Right cardiac atrium (tissue), 5 donors: ENCODE measurements at regions of chr2 and their contacts with region 1.

Region 1: DNA sequence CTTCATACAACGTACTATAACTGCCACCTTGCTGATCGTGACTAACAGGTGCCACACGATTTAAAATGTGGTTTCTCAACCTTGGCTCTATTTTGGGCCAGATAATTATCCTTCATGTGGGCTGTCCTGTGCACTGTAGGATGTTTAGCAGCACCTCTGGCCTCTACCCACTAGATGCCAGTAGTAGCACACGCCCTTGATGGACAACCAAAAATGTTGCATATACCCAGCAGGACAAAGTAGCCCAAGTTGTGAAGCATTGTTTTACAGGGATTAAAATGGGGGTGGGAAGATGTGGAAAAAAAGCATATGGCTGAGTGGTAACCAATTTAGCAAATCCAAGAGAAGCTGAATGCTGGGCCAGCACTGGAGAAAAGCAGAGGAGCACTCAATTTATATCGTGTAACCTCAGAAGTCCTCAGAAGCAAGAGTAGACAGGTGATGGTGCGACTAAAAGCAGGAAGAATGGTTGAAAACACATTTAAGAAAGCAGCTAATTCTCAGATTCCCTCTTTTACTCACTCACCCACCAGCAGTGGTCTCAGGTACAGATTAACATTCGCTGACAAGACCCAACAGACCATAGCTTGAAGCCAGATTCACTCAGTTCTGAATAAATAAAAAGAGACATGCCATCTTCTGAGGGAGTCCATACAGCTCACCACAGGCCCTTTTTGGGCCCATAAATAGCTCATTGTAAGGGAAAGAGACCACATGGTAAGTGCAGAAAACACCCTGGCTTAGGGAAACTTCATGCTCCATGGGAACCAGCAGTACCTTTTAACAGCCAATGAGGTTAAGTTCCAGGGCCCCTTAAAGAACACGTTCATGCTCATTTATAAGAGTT is 50.6 kb downstream of the RAPH1 start:
- DNase-seq: no peak
- ATAC-seq: peak; percentile 77 to 85
- H3K4me3 ChIP-seq: no peak overlapping the region
- H3K27ac ChIP-seq: no peak overlapping the region
- H3K4me1 ChIP-seq: no peaks in the 10 kb centered on the region
- H3K27me3 ChIP-seq: no peaks in the 10 kb centered on the region

Region 2: GRCh38 chr2:203327901-203328759 is 156.4 kb before region 1 on chr2 and contains the start of gene ABI2:
- intact Hi-C with region 1: no loop called
- DNase-seq: peak; percentile 87 to 96 (median 94)
- ATAC-seq: peak; percentile 96
- H3K4me3 ChIP-seq: peak within 1 kb of the TSS; percentile 99
- H3K27ac ChIP-seq: peak within 1 kb of the TSS; percentile 99
- H3K4me1 ChIP-seq: no peaks in the 10 kb centered on the region
- H3K27me3 ChIP-seq: no peaks in the 10 kb centered on the region
- total RNA-seq, gene ABI2: 59.4 to 75.4 (median 65.5) TPM

Region 3: GRCh38 chr2:203814661-203815540 is 330.4 kb after region 1 on chr2:
- intact Hi-C with region 1: loop called (anchors 5 to 10 kb)
- DNase-seq: peak; percentile 48 to 82 (median 78)
- ATAC-seq: peak; percentile 79 to 89
- H3K4me3 ChIP-seq: peak overlapping the region; percentile 17
- H3K27ac ChIP-seq: peak overlapping the region; percentile 55
- H3K4me1 ChIP-seq: peaks cover 4% of the 10 kb centered on the region
- H3K27me3 ChIP-seq: no peaks in the 10 kb centered on the region

Region 4: GRCh38 chr2:203909261-203909967 is 424.9 kb after region 1 on chr2:
- intact Hi-C with region 1: loop called in 1 of 4 experiments (anchors 10 kb)
- DNase-seq: no peak
- ATAC-seq: peak; percentile 86 to 92
- H3K4me3 ChIP-seq: peak overlapping the region; percentile 40
- H3K27ac ChIP-seq: no peak overlapping the region
- H3K4me1 ChIP-seq: peaks cover 2% of the 10 kb centered on the region
- H3K27me3 ChIP-seq: no peaks in the 10 kb centered on the region